ENCODE measurements at regions of chr19 and their contacts with region 1.

Region 1: DNA sequence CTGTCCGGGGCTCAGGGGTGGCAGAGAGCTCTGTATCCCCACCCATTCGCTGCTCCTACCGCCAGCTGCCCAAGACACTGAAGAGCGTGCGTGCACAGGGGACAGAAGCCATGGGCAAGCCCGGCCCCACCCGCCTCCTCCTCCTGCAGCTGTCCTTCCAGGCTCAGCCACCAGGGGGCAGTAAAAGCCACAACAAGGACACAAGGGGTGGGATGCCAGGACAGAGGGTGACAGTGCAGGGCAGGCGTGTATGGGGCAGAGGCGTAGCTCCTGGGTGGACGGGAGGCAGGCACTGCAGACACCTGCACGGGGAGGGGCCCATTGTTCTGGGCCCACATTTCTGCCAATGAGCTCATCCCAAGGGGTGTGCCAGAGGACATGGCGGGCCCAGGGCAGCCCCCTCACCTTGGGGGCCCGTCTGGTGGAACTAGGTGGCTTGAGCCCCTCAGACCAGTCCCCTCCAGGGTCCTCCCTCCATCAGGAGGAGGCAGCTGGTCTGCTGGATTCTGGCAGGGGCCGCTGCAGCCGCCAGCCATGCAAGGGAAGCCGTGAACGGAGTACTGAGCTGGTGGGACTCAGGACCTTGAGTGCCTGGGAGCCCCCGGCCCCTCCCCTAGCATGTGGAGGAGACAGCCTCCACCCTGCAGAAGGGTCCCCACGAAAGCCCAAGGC is 61.1 kb downstream of the MLLT1 start:
- DNase-seq: peak; percentile 94
- CTCF ChIP-seq: peak; percentile 97

Region 2: GRCh38 chr19:6125571-6125989 is 93.0 kb before region 1 on chr19:
- CTCF ChIA-PET with region 1: interaction called, 17 read pairs
- POLR2A ChIA-PET with region 1: no interaction called
- DNase-seq: peak; percentile 69
- CTCF ChIP-seq: peak; percentile 85

Region 3: GRCh38 chr19:6233827-6234511 is 15.3 kb after region 1 on chr19:
- CTCF ChIA-PET with region 1: interaction called, 27 read pairs
- POLR2A ChIA-PET with region 1: interaction called, 4 read pairs
- DNase-seq: no peak
- CTCF ChIP-seq: no peak

Region 4: GRCh38 chr19:6267552-6268381 is 49.1 kb after region 1 on chr19:
- CTCF ChIA-PET with region 1: interaction called, 11 read pairs
- POLR2A ChIA-PET with region 1: no interaction called
- DNase-seq: no peak
- CTCF ChIP-seq: no peak

Region 5: GRCh38 chr19:6333440-6333839 is 114.8 kb after region 1 on chr19 and contains the start of gene ACER1:
- CTCF ChIA-PET with region 1: interaction called, 10 read pairs
- POLR2A ChIA-PET with region 1: no interaction called
- DNase-seq: no peak
- CTCF ChIP-seq: no peak